Ascending aorta (tissue), 2 donors: ENCODE measurements at regions of chr3 and their contacts with region 1.

Region 1: GRCh38 chr3:185937689-185938463 is at the start of gene TRA2B:
- DNase-seq: peak; percentile 97 to 99
- H3K4me3 ChIP-seq: peak within 1 kb of the TSS; percentile 99
- H3K27ac ChIP-seq: peak within 1 kb of the TSS; percentile 100
- H3K4me1 ChIP-seq: peaks cover 3 to 8% of the 10 kb centered on the region in 2 donors
- H3K27me3 ChIP-seq: no peaks in the 10 kb centered on the region
- CTCF ChIP-seq: peak in 2 of 3 experiments; percentile 39 to 40
- total RNA-seq, gene TRA2B: 138 TPM

Region 2: DNA sequence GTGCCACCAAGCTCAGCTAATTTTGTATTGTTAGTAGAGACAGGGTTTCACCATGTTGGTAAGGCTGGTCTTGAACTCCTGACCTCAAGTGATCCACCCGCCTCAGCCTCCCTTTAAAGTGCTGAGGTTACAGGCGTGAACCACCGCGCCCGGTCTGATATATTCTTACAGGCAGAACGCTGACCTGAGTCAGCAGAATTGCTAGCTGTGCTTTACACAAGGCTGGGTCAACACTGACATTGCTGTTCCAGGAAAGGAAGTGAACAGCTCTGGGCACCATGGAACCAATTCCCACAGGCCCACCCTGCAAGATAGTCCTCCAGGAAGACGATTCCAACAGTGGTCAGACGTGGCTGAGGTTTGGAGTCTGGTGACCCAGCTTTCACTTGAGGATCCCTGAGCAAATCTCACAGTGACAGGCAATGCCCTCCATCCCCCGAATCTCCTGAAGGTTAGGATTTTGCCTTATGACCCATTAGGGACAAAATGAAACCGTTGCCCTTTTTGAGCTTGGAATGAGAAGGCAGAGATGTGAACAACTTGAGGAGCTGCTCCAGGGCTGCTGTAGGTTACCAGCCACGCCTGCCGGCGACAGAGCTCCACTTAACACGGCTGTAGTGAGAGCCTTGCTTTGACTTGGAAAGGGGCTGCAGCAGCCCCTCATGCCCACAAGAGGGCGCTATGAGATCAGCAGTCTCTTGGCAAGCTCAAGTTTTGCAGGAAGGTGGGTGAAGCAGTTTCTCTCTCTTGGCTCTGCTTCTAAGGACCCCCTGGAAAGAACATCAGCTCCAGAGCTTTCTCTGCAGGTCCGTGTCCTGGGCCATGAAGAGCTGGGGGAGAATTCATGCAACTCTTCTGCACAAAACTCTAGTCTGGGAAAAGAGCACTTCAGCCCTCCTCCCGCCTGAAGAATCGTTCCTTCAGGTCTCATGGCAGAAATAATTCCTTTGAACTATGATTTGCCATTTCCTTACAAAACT is 277.6 kb before region 1 on chr3:
- intact Hi-C with region 1: loop called (anchors 5 kb)
- DNase-seq: peak in 1 of 2 donors; percentile 85
- H3K4me3 ChIP-seq: peak overlapping the region in 1 of 2 donors; percentile 24
- H3K27ac ChIP-seq: peak overlapping the region in 1 of 2 donors; percentile 14
- H3K4me1 ChIP-seq: peaks cover 4 to 47% of the 10 kb centered on the region in 2 donors
- H3K27me3 ChIP-seq: no peaks in the 10 kb centered on the region
- CTCF ChIP-seq: peak; percentile 82 to 97 (median 96)

Region 3: GRCh38 chr3:185959609-185960517 is 22.0 kb after region 1 on chr3:
- intact Hi-C with region 1: no loop called
- DNase-seq: no peak
- H3K4me3 ChIP-seq: peak overlapping the region in 1 of 2 donors; percentile 35
- H3K27ac ChIP-seq: peak overlapping the region; percentile 54 to 57
- H3K4me1 ChIP-seq: no peaks in the 10 kb centered on the region
- H3K27me3 ChIP-seq: no peaks in the 10 kb centered on the region
- CTCF ChIP-seq: no peak

Region 4: GRCh38 chr3:186413615-186414415 is 475.9 kb after region 1 on chr3:
- intact Hi-C with region 1: loop called (anchors 5 kb)
- DNase-seq: peak in 1 of 2 donors; percentile 81
- H3K4me3 ChIP-seq: peak overlapping the region; percentile 61 to 63
- H3K27ac ChIP-seq: peak overlapping the region; percentile 56 to 69
- H3K4me1 ChIP-seq: peaks cover 0 to 17% of the 10 kb centered on the region in 2 donors
- H3K27me3 ChIP-seq: no peaks in the 10 kb centered on the region
- CTCF ChIP-seq: no peak

Region 5: DNA sequence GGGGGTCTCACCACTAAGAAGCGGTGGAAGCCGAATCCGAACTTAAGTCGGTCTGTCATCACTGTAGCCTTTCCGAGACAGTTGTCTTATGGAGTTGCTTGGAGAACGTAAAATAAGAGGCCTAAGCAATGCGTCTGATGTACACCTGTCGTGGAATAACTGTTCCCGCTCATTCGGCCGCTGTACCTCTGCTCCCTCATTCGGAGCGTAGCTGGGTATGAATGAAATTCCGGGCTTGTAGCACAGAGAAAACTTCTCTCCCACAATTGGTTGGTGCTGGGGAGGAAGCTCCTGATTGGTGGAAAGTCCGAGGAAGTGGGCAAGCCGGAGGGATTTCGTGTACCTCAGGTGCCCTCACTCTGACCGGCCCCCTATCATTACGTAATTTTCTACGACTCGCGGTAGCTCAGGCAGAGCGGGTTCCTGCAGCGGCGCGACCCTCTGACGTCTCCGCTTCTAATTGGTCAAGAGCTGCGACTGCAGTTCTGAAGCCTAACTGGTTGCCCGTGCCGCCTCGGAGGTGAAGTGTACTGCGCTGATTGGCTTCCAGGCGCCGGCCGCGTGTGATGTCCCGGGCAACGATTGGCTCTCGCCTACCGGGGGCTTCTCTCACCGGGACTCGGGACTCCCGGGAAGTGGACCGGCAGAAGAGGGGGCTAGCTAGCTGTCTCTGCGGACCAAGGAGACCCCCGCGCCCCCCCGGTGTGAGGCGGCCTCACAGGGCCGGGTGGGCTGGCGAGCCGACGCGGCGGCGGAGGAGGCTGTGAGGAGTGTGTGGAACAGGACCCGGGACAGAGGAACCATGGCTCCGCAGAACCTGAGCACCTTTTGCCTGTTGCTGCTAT is 632.4 kb after region 1 on chr3 and contains the start of gene DNAJB11:
- intact Hi-C with region 1: loop called (anchors 1 kb)
- DNase-seq: peak; percentile 97 to 100
- H3K4me3 ChIP-seq: peak within 1 kb of the TSS; percentile 98 to 99
- H3K27ac ChIP-seq: peak within 1 kb of the TSS; percentile 93 to 97
- H3K4me1 ChIP-seq: peaks cover 0 to 21% of the 10 kb centered on the region in 2 donors
- H3K27me3 ChIP-seq: no peaks in the 10 kb centered on the region
- CTCF ChIP-seq: no peak
- total RNA-seq, gene DNAJB11: 31.3 TPM

Region 6: DNA sequence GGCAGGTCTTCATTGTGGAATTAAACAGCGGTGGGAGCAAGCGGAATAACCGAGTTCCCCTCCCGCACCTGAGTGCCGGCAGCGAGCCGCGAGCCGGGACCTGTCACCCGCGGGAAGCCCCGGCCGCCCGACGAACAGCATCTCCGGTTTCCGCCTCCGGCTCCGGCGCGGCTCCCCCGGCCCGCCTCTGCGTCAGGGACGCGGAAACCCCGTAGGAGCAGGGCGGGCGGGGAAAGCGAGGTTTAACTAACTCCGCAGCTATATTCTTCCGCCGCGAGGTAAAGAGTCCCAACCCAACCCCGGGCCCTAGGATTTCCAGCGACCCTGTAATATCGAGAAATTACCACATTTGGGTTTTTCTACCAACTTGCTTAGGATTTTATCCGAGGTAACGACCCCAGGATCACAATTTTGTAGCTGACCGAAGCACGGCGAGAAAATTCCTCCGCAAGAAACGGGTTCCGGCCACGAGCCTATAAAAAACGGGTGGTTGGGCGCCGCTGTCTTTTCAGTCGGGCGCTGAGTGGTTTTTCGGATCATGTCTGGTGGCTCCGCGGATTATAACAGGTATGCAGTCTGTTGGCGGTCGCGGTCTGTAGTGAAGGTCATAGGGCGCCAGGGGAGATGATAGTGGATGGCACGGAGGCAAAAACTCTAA is 845.3 kb after region 1 on chr3 and contains the start of gene EIF4A2:
- intact Hi-C with region 1: loop called (anchors 10 kb)
- DNase-seq: peak; percentile 60 to 94
- H3K4me3 ChIP-seq: peak within 1 kb of the TSS; percentile 88 to 94
- H3K27ac ChIP-seq: peak within 1 kb of the TSS; percentile 98
- H3K4me1 ChIP-seq: peaks cover 10 to 30% of the 10 kb centered on the region in 2 donors
- H3K27me3 ChIP-seq: no peaks in the 10 kb centered on the region
- CTCF ChIP-seq: no peak
- total RNA-seq, gene EIF4A2: 260 TPM